Heart left ventricle (tissue), 16 donors: ENCODE measurements at regions of chr11 and their contacts with region 1.

Region 1: DNA sequence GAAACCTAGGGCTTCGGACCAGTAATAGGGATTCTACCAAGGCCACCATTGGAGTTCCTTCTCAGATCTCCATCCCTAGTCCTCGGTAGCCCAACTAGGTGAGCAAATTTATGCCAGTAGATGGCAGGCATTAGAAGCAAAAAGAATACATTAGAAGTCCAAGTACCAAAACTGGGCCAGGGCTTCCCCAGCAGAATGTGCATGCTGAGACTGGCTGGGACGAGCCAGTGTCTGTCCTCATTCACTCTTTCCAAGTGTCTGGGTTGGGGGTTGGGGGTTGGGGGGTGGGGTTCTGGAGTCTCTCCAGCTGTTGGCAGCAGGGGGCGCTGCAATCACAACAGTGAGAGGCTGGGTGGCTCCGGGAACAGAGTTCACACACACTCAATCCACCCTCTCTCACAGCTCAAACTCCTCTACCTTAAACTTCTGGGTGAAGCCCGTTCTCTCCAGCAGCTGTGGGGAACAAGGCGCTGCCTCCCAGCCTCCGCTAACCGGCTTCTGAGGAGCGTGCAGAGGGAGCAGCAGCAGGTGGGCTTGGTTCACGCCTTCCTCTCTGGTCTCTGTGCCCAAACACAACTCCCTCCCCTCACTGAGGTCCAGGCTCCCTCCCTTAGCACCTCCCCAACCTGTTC is 57.5 kb downstream of the BTG4 start:
- DNase-seq: peak in 1 of 5 donors; percentile 44
- ATAC-seq: peak; percentile 40 to 71 (median 52)
- H3K4me3 ChIP-seq: no peak overlapping the region
- H3K27ac ChIP-seq: no peak overlapping the region
- H3K4me1 ChIP-seq: no peaks in the 10 kb centered on the region
- H3K27me3 ChIP-seq: peaks cover 0 to 16% (median 0%) of the 10 kb centered on the region in 9 donors
- CTCF ChIP-seq: peak; percentile 15 to 48 (median 30)
- POLR2A ChIP-seq: no peak

Region 2: DNA sequence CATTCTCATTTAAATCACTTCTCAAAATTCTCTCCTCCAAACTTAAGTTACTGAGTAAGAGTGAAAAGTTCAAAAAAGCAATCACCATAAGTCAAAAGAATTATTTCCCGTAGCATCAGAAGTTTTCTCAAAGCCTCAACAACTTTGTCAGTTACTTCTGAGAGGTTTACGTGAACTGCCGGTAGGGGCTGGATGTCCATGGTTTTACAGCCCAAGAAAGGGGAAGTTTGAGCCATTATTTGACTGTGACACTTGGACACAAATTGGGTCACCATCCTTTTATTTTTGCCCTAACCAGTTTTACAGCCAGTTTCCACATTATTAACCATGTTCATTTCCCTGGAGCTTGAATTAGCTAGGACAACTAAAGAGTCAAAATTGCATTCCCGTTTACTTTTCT is 148.8 kb before region 1 on chr11:
- intact Hi-C with region 1: no loop called
- DNase-seq: no peak
- ATAC-seq: no peak
- H3K4me3 ChIP-seq: no peak overlapping the region
- H3K27ac ChIP-seq: no peak overlapping the region
- H3K4me1 ChIP-seq: peaks cover 0 to 4% (median 0%) of the 10 kb centered on the region in 12 donors
- H3K27me3 ChIP-seq: peaks cover 0 to 17% (median 3%) of the 10 kb centered on the region in 9 donors
- CTCF ChIP-seq: no peak
- POLR2A ChIP-seq: no peak

Region 3: DNA sequence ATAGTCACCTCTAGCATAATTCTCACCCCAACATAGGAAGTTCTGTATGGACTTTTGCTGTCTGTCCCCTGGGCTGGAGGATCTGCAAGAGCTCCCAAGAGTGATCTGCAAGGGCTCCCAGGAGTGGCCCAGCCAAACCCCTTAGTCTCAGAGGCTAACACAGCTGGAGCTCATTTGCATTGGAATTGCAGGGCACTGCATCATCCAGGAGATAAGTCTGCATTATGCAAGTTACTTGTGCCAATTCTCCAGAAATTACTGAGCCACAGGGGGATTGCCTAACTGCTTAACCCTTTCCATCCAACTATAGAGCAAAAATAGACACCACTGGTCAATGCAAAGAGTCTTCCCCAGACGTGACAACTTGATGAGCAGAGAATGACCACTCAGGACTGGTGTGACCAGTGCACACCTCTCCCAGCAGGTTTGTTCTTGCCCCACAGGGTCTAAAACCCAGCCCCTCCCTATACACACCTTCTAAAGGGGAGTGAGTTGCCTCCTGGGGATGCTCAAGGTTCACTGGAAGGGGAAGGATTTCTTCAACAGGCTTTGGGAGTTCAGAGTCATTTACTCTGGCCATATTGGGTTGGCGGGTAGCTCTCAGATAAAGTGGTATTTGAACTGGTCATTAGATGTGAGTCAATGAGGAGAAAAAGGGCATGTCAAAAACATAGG is 118.0 kb before region 1 on chr11:
- intact Hi-C with region 1: no loop called
- DNase-seq: no peak
- ATAC-seq: peak in 2 of 4 donors; percentile 36 to 47
- H3K4me3 ChIP-seq: no peak overlapping the region
- H3K27ac ChIP-seq: no peak overlapping the region
- H3K4me1 ChIP-seq: peaks cover 0 to 15% (median 0%) of the 10 kb centered on the region in 12 donors
- H3K27me3 ChIP-seq: no peaks in the 10 kb centered on the region
- CTCF ChIP-seq: no peak
- POLR2A ChIP-seq: no peak

Region 4: DNA sequence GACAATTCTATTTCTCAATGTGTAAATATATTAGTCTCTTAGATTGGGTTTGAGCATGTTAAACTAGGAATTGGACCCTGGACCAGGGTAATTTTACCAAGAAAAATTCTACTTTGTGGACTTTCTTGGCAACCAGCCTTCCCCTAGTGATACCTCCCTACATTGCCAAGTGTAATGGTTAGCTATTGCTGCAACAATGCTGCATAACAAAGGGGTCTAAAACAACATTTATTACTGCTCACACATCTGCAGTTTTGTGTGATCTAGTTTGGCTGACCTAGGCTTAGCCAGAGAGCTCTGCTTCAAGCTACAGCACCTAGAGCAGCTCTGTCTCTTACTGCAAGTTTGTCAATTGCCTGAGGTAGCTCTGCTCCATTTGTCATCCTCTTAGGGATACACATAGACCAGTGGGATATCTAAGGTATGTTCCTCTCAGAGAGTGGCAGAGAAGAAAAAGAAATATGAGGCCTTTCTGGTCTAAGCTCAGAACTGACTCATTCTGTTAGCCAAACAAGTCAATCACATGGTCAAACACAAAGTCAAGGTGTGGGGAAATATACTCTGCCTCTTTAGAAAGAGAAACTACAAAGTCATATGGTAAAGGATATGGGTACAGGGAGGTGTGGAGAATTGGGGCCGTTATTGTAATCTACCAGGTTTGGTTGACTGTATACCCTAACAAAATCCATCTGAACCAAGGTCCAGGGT is 83.9 kb after region 1 on chr11:
- intact Hi-C with region 1: loop called in 1 of 10 experiments (anchors 5 kb)
- DNase-seq: no peak
- ATAC-seq: no peak
- H3K4me3 ChIP-seq: no peak overlapping the region
- H3K27ac ChIP-seq: no peak overlapping the region
- H3K4me1 ChIP-seq: peaks cover 0 to 30% (median 16%) of the 10 kb centered on the region in 12 donors
- H3K27me3 ChIP-seq: peaks cover 0 to 34% (median 4%) of the 10 kb centered on the region in 9 donors
- CTCF ChIP-seq: no peak
- POLR2A ChIP-seq: no peak